Cardiac septum (tissue), 1 donor: ENCODE measurements at regions of chr3 and their contacts with region 1.

Region 1: GRCh38 chr3:160754855-160755747 is 930 bp upstream of the PPM1L start:
- DNase-seq: peak; percentile 96

Region 2: DNA sequence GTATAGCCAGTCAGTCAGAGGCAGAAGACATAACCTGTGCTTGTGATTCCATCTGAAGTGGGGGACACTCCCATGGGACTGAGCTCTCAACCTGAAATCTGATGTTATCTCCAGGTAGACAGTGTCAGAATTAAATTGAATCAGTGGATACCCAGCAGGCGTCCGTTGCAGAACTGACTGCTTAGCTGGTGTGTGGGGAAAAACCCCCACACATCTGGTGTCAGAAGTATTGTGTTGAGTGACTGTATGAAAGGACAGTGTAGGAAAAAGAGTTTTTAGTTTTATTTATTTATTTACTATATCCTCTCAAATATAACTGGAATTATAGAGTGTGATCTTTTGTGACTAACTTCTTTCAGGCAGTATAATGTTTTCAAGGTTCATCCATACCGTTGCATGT is 200.1 kb before region 1 on chr3:
- intact Hi-C with region 1: no loop called
- DNase-seq: no peak

Region 3: DNA sequence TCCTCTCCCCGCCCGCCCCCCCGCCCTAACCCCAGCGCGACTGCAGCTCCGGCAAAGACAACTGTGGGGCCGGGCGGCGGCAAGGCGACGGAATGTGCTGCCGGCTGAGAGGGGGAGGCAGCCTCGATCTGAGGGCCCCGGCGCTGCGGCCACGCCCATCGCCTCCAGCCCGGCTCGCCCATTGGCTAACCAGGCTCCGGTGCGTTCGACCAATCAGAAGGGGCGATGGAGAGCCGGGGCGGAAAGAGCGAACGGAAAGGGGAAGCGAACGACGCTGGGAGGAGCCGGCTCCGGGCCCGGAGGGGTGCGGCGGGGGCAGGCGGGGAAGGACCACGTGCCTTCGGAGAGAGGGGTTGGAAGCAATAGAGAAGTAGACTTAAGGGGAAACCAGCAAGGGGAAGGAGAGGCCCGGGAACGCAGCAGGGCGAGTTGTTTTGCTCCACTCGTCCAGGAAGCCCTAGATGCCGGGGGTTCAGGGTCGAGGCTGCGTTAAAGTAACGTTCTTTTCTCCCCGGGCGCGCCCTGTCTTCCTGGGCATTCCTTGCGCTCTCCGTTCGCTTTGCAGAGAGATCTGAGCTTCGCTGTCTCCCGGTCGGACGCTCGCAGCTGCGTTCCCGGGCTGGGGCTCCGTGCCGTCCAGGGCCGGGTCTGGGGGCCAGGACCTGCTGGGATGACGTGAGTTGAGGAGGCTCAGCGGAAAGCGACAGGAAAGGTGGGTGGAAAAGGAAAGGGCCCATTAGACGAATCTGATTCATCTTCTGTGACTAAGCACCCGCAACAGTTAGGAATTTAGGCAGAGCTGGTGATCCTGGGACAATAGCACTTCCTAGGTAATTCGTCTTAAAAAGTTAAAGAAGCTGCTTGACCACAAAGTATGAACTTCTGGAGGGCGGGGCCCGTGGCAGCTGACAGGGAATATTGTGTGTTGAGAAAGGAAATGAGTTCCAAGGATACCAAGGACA is 189.4 kb before region 1 on chr3 and contains the start of gene KPNA4:
- intact Hi-C with region 1: loop called (anchors 1 kb)
- DNase-seq: peak; percentile 99
- total RNA-seq, gene KPNA4: 144 TPM

Region 4: DNA sequence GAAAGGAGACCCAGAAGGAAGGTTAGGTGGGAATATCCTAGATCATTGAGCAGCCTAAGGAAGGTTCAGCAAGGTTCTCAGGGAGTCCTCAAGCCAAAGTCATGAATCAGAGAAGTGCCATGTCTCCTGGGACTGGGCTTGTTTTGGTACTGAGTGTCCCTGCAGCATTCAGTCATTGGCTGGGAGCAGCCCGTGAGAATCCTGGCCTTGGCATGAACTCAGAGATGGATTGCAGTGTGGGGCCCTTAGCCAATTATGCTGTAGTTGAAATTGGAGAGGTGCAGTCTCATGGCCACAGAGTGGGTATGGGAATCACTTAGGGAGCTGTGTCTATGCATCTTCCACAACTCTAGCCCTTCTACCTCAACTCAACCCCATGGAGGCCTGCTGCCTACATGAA is 16.0 kb before region 1 on chr3:
- intact Hi-C with region 1: no loop called
- DNase-seq: no peak

Region 5: DNA sequence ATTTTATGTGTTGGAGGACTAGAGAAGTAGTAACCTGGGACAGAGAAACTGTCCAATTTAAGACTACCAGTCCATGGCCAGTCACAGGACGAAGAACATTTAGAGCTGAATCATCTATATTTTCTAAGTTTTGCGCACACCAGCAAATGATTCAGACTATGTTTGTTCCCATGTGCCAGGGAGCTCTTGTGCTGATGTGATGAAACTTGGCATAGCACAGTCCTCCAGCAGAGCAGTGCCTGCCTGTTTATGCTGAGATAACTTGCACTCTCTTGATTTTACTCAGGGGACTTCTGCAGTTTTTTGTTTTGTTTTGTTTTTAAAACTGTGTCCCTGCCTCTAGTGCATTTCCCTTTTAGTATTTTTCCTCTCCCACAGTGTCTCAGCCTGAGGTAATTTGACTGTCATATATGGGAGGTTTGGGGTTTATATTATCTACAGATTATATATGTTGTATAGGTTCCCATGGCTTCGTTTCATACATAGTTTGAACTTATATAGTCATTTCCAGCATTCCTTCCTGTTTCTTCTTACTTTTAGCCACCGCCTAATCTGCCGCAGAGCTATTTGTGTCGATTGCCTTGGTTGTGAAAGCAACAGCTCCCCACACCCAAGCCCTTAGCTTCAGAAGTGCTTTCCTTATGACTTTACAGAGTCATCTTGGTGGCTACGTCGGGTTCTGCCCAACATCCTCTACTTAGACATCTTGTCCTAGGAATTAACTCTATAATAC is 46.5 kb after region 1 on chr3:
- intact Hi-C with region 1: loop called (anchors 2 kb)
- DNase-seq: no peak

Region 6: DNA sequence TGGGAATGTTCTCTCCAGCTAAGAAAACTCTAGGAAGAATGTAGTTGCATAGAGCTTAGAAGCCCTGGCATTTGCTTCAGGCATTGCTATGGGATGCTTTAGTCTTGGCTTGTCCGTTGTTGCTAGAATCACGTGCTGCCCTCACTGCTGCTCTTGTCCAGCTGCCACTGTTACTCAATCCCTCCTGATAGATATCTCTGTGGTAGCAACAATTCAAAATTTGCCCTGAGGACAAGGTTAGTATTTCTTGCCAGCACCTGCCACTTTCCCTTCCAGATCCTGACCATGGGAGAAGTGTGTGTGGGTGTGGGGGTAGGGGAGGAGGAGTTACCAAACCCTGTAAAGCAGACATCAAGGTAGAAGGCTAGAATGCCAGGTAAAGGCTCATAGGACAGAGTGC is 114.7 kb after region 1 on chr3:
- intact Hi-C with region 1: loop called (anchors 5 kb)
- DNase-seq: no peak

Region 7: GRCh38 chr3:160929595-160929994 is 174.5 kb after region 1 on chr3:
- intact Hi-C with region 1: loop called (anchors 5 kb)
- DNase-seq: peak; percentile 79

Region 8: DNA sequence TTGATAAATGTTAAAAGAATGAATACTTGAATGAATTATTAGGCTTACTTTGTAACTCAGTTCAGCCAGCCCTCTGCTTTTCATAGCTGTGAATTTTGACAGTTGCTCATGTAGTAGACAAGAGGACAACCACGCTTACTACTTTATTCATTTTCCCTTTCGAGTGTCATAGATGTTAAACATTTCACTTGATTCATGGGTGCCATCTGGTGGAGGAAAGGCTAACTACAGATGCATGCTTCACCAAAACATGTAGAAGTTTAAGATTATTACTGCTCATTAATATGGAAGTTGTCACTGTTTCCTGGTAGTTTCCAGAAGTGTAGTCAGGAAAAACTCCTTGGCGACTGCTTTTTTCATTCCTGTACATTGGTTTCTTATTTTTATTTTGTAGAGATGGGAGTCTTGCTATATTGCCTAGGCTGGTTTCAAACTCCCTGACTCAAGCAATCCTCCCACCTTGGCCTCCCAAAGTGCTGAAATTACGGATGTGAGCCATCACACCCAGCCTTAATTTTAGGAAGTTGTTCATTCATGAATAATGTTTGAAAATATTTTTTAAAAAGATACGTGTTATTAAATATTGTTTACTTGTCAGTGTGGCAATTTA is 186.9 kb after region 1 on chr3:
- intact Hi-C with region 1: loop called (anchors 5 kb)
- DNase-seq: no peak